ENCODE measurements at regions of chr6 and their contacts with region 1.

Region 1: DNA sequence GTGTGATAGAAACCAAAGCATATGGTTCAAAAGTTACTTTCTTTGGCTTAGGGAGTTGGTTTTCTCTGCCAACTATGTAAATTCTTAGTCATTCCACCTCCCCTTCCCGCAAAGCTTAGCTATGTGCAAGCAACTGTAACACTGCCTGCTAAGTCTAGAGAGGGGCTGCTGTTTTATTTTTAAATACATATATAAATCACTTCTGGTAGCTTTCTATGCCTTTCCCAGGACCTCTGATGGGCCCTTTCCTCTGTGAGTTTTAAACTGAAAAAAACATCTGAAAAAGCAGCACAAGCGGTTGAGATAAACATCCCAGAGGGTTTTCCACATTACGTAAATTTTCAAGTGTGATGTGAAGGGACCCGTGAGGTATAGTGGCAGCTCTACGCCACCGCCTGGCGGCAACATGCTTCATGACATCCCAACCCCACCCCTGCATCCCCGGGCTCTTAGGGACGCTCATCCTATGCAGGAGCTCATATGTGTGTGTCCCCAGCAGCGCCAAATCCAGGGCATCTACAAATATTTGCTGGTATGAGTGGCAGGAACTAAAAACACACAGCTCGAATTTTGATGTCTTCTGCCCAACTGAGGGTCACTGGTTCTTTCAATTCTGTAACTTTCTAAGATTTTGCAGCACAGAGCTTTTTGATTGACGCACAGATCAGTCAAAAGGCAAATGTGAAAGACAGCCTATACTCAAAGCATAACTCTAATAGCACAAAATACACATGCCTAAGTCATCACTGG is 12.7 kb downstream of the SAYSD1 start:
- DNase-seq: no peak
- H3K4me3 ChIP-seq: no peak overlapping the region
- H3K27ac ChIP-seq: no peak overlapping the region
- H3K4me1 ChIP-seq: peaks cover 2% of the 10 kb centered on the region
- H3K27me3 ChIP-seq: no peaks in the 10 kb centered on the region
- CTCF ChIP-seq: no peak
- EP300 ChIP-seq: no peak
- POLR2A ChIP-seq: no peak

Region 2: GRCh38 chr6:38973178-38974054 is 128.8 kb before region 1 on chr6:
- intact Hi-C with region 1: no loop called
- DNase-seq: no peak
- H3K4me3 ChIP-seq: no peak overlapping the region
- H3K27ac ChIP-seq: no peak overlapping the region
- H3K4me1 ChIP-seq: no peaks in the 10 kb centered on the region
- H3K27me3 ChIP-seq: no peaks in the 10 kb centered on the region
- CTCF ChIP-seq: no peak
- EP300 ChIP-seq: no peak
- POLR2A ChIP-seq: no peak

Region 3: DNA sequence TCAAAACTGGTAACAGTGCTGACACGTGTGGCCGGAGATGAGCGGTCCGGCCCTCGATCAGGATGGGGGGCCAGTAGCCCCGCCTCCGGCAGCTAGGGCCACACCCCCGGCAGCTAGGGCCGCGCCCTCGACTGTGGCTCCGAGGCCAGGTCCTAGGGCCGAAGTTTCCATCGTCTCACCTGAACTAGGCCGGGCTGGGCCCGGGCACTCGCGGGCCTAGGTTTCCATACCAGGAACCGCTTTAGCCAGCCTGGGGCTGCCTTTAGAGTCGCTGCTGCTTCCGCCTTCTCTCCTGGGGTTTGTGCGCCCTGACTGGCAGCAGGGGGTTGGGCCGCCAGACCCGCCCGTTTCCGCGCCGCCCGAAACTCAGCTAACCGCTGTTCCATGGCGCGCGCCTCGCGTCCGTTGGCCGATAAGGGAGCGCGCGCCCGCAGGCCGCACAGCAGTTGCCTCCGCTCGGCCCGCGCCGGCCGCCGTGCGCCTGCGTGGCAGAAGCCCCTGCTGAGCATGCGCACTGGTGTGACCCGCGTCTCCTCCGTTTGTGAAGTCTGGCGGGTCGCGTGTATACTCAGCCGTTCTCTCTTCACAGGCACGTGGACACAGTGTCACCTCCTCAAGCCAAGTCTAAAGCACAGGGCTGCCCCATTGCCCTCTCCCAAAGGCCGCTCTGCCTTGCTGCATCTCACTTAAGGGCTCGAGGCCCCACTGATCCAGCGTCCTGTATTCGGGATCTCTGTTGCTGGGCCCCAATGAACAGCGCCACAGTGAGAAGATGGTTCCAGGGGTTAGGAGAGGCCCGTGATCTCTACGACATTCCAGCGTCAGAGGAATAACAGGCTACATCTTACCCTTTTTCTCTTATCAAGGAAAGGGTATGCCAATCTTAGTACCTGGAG is 12.7 kb after region 1 on chr6 and contains the start of gene SAYSD1:
- intact Hi-C with region 1: loop called in 1 of 4 experiments (anchors 2 kb)
- DNase-seq: peak; percentile 90 to 95 (median 93)
- H3K4me3 ChIP-seq: peak within 1 kb of the TSS; percentile 74
- H3K27ac ChIP-seq: peak within 1 kb of the TSS; percentile 83 to 89
- H3K4me1 ChIP-seq: peaks cover 2% of the 10 kb centered on the region
- H3K27me3 ChIP-seq: no peaks in the 10 kb centered on the region
- CTCF ChIP-seq: peak in 2 of 3 donors; percentile 18 to 24
- EP300 ChIP-seq: no peak
- POLR2A ChIP-seq: peak; percentile 63
- total RNA-seq, gene SAYSD1: 11.7 to 17.7 (median 15.9) TPM

Region 4: GRCh38 chr6:39218873-39219536 is 116.8 kb after region 1 on chr6:
- intact Hi-C with region 1: loop called in 1 of 4 experiments (anchors 10 kb)
- DNase-seq: no peak
- H3K4me3 ChIP-seq: no peak overlapping the region
- H3K27ac ChIP-seq: no peak overlapping the region
- H3K4me1 ChIP-seq: peaks cover 29% of the 10 kb centered on the region
- H3K27me3 ChIP-seq: no peaks in the 10 kb centered on the region
- CTCF ChIP-seq: no peak
- EP300 ChIP-seq: no peak
- POLR2A ChIP-seq: no peak

Region 5: GRCh38 chr6:39251406-39251805 is 149.2 kb after region 1 on chr6:
- intact Hi-C with region 1: no loop called
- DNase-seq: no peak
- H3K4me3 ChIP-seq: no peak overlapping the region
- H3K27ac ChIP-seq: no peak overlapping the region
- H3K4me1 ChIP-seq: peaks cover 2% of the 10 kb centered on the region
- H3K27me3 ChIP-seq: no peaks in the 10 kb centered on the region
- CTCF ChIP-seq: no peak
- EP300 ChIP-seq: no peak
- POLR2A ChIP-seq: no peak